ENCODE measurements at regions of chr6 and their contacts with region 1.

Region 1: GRCh38 chr6:18122124-18123093 is at the start of gene NHLRC1:
- DNase-seq: peak; percentile 76
- ATAC-seq: peak; percentile 99
- H3K4me3 ChIP-seq: peak within 1 kb of the TSS; percentile 49 to 69
- H3K27ac ChIP-seq: peak within 1 kb of the TSS; percentile 86
- H3K4me1 ChIP-seq: no peaks in the 10 kb centered on the region
- H3K27me3 ChIP-seq: no peaks in the 10 kb centered on the region
- CTCF ChIP-seq: peak; percentile 93
- total RNA-seq, gene NHLRC1: 2.1 TPM

Region 2: DNA sequence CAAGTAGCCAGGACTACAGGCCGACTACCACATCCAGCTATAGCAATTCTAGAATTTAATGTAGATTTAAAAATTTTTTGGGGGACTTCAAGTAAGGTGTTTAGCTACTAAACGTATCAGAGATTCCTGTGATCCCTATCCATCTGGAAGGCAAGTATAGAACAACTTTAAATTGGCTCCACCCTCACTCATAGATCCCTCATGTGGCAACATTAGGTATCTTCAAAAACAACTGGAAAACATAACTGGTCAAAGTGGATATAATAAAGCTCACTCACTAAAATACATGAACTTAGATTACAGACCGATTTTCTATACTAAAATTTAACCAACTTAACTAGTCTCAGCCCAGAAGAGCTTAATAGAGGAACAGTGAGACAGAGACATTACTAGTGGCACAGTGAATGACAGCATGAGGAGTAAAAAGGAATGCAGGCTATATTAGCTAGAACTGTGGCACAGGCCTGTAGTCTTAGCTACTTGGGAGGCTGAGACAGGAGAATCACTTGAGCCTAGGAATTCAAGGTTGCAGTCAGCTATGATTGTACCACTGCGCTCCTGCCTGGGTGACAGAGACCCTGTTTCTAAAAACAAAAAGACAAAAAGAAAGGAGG is 430.4 kb before region 1 on chr6:
- CTCF ChIA-PET with region 1: no interaction called
- POLR2A ChIA-PET with region 1: no interaction called
- in situ Hi-C with region 1: no loop called
- intact Hi-C with region 1: no loop called
- DNase-seq: no peak
- ATAC-seq: peak; percentile 68; the same call in 1 of the 2 replicates
- H3K4me3 ChIP-seq: no peak overlapping the region
- H3K27ac ChIP-seq: no peak overlapping the region
- H3K4me1 ChIP-seq: no peaks in the 10 kb centered on the region
- H3K27me3 ChIP-seq: no peaks in the 10 kb centered on the region
- CTCF ChIP-seq: no peak

Region 3: GRCh38 chr6:17816921-17817611 is 305.3 kb before region 1 on chr6:
- CTCF ChIA-PET with region 1: no interaction called
- POLR2A ChIA-PET with region 1: no interaction called
- in situ Hi-C with region 1: no loop called
- intact Hi-C with region 1: loop called (anchors 10 kb)
- DNase-seq: no peak
- ATAC-seq: no peak
- H3K4me3 ChIP-seq: no peak overlapping the region
- H3K27ac ChIP-seq: no peak overlapping the region
- H3K4me1 ChIP-seq: no peaks in the 10 kb centered on the region
- H3K27me3 ChIP-seq: no peaks in the 10 kb centered on the region
- CTCF ChIP-seq: no peak

Region 4: DNA sequence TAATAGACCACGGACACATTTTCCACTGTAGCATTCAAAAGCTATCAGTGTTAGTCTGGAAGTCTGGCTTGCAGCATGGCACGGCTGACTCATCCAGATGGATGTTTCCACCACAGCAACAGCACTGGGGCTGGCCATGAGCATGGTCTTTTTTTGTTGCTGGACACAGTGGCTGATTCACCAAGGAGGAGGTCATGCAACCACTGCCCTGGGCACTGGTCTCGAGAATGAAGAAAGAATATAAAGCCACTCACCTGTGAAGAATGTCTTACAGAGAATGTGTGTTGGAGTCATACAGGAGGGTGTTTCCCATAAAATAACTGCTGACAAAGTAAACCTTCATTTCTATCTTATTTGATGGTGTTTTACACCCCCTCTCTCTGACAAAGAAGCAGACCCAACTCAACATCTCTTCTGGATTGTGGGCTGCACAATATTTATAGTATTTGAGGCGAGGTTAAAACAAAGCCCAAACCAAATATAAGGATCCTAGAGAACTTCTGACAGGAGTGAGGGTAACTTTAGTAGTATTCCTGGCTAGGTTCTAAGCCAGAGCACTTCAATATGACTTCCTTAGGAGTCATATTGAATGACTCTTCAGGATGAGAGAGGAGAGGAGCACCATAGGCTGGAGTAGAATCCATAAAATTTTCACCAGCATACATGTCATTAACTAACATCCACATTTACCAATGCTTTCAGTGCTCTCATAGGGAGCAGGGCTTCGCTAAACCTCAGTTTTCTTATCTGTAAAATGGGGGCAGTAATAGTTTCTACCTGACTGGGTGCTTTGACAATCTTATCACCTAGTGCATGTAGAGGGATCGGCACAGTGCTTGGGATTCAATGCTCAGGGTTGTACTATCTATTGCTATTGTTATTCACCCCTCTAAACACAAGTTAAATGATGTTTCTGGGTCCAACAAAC is 256.3 kb before region 1 on chr6:
- CTCF ChIA-PET with region 1: no interaction called
- POLR2A ChIA-PET with region 1: no interaction called
- in situ Hi-C with region 1: no loop called
- intact Hi-C with region 1: loop called (anchors 10 kb)
- DNase-seq: peak; percentile 92
- ATAC-seq: peak; percentile 91
- H3K4me3 ChIP-seq: no peak overlapping the region
- H3K27ac ChIP-seq: peak overlapping the region; percentile 81
- H3K4me1 ChIP-seq: peaks cover 50% of the 10 kb centered on the region
- H3K27me3 ChIP-seq: no peaks in the 10 kb centered on the region
- CTCF ChIP-seq: no peak

Region 5: GRCh38 chr6:18099511-18099910 is 22.9 kb before region 1 on chr6:
- CTCF ChIA-PET with region 1: no interaction called
- POLR2A ChIA-PET with region 1: no interaction called
- in situ Hi-C with region 1: no loop called
- intact Hi-C with region 1: no loop called
- DNase-seq: no peak
- ATAC-seq: no peak
- H3K4me3 ChIP-seq: no peak overlapping the region
- H3K27ac ChIP-seq: no peak overlapping the region
- H3K4me1 ChIP-seq: no peaks in the 10 kb centered on the region
- H3K27me3 ChIP-seq: no peaks in the 10 kb centered on the region
- CTCF ChIP-seq: no peak

Region 6: DNA sequence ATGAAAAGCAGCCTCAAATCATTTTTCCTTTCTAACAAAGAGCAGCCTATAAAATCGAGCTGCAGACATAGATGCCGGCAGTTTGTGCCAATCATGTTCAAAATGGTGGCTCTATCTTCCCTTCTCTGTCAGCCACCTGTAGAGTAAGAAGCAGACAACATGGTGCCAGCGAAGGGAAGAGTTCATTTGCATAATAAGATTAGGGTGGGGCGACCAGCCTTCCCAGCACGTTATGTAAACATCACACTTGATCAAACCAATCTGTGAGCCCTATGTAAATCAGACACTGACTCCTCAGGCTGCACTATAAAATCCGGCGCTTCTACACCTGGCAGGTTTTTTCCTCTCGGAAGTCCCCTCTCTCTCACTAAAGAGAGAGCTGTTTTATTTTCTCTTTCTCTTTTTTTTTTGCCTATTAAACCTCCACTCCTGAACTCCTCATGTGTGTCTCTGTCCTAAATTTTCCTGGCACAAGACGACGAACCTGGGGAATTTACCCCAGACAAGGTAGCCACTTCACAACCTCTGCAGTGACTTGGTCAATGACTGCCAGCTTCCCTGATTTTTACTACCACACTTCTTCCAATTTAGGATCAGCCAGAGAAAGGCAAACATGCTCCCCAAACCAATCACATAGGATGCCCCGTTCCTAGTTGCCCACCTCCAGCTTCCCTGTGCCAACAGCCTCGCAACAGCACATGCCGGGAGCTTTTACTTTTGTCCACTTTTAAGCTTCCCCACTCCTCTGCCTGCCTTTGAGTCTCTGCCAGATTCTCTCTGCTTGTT is 19.6 kb after region 1 on chr6:
- CTCF ChIA-PET with region 1: no interaction called
- POLR2A ChIA-PET with region 1: no interaction called
- in situ Hi-C with region 1: no loop called
- intact Hi-C with region 1: no loop called
- DNase-seq: no peak
- ATAC-seq: no peak
- H3K4me3 ChIP-seq: no peak overlapping the region
- H3K27ac ChIP-seq: no peak overlapping the region
- H3K4me1 ChIP-seq: no peaks in the 10 kb centered on the region
- H3K27me3 ChIP-seq: no peaks in the 10 kb centered on the region
- CTCF ChIP-seq: no peak